Activated T-helper 1 cell treated with anti-CD3 and anti-CD28 coated beads, Interleukin-12 subunit alpha, Interleukin-12 subunit beta, Interleukin-2, Interleukin-4 antibody, amounts not matched to agents 30 ng/mL and 10 ng/mL and 1 ng/mL, durations not matched to agents 14 hours and 24 hours and 36 hours (primary cell): ENCODE measurements at regions of chr11 and their contacts with region 1.

Region 1: DNA sequence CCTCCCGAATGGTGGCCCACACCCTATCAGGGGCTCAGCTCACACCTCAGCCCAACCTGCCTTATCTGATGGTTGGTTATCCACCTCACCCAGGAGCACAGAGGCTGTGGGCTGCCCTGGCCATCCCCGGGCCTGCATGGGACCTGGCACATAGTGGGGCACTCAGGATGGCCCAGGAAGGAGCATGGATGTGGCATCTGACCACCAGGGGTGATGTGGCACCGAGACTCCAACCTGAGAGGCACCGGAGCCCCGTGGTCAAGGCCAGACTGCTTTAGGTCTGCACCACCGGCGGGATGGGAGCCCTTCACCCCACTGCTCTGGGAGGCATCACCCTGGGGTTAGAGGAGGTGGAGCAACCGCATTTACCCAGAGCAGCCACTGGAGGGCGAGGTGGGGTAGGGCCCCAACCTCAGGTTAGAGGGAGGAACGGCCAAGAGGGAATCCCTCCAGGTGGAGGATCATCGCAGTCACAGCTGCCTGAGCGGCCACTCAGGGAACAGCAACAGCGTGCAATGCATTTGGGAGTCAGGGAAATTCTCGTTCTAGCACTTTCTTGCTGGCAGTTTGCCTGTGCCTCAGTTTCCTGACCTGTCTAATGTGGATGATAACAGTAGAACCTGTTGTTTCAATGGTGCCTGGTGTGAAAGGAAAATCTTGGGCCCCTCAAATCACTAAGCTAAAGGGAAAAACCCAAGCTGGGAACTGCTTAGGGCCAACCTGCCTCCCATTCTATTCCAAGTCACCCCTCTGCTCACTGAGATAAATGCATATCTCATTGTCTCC is 52.9 kb upstream of the CARS1 start:
- DNase-seq: no peak
- H3K4me3 Mint-ChIP-seq: no peak overlapping the region
- H3K27ac Mint-ChIP-seq: no peak overlapping the region
- H3K4me1 Mint-ChIP-seq: no peaks in the 10 kb centered on the region
- H3K27me3 Mint-ChIP-seq: no peaks in the 10 kb centered on the region

Region 2: DNA sequence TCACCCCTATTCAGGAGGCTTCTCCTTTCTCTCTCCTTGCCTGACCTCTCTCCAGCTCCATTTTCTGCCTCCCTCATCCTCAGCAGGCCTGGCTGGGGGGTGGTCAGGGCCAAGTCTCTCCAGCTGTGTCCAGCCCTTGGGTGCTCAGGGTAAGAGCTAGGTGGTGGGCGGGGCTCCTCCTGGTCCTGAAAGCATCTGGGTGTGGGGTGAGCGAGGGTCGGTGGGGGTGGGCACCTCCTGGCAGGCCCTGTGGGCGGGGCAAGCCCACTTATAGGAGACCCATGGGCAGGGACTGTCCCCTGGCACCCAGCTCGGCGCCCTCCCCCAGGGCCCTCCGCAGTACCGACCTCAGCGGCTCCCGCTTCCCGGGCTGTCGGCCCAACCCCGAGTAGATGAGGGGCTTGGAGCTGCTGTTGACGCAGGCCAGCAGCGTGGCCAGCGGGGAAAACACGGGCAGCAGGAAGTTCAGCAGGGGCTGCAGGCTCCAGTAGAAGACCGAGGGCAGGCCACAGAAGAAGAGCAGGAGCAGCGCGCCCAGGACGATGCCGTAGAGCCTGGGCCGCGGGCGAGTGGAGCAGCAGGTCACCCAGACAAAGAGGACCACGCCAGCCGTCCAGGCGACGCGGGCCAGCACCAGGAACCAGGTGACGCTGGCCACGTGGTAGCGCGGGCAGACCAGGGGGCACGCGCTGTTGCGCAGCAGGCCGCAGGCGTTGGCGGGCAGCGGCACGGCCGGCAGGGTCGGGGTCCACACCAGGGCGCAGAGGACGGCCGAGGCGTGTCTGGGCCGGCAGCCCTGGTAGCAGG is 107.8 kb after region 1 on chr11:
- intact Hi-C with region 1: loop called (anchors 1 kb)
- DNase-seq: no peak
- H3K4me3 Mint-ChIP-seq: no peak overlapping the region
- H3K27ac Mint-ChIP-seq: no peak overlapping the region
- H3K4me1 Mint-ChIP-seq: no peaks in the 10 kb centered on the region
- H3K27me3 Mint-ChIP-seq: peaks cover 2% of the 10 kb centered on the region